ENCODE measurements at regions of chr6 and their contacts with region 1.

Region 1: DNA sequence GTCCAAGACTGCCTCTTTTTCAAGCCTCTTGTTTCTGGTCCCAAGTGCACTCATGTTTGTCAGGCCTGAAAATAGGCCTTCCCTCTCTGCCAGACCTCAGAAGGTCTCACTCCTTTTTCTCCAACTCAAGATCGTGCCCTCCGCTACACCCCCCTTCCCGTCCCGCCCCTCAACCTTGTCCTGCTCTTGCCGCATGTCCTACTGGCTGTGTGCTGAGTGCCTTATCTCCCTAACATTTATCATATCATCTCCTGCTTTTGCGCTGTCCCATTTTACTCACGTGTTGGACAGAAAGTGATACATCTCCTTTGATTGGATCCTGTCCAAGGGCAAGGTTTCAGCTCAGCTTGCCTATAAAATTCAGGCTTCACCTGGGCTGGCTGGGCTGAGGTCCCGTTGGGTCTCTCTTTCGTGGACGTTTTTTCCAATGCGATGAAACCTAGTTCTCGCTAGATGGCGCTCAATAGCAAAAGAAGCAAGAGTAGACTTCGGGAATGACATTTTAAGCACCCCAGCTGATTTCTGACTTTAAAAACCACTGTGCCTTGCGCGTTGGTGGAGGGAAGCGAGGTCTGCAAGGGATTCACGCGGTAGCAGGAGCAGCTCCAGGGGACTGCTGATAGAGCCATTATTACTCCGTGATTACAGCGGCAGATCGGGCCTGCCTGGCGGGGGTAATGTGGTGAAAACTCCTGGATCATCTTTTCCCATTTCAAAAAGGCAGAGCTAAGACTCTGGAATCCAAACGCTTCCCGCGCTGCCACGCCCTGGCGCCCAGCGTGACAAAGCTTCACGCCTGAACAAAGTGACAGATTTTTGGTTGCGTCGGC is 137.6 kb downstream of the IMPG1 start:
- DNase-seq: peak; percentile 16
- ATAC-seq: peak; percentile 86
- H3K4me3 ChIP-seq: peak overlapping the region; percentile 14; the same call in 1 of the 2 replicates
- H3K27ac ChIP-seq: no peak overlapping the region
- H3K4me1 ChIP-seq: no peaks in the 10 kb centered on the region; the same call in 1 of the 2 replicates
- H3K27me3 ChIP-seq: peaks cover 0 to 2% of the 10 kb centered on the region in 2 experiments; a peak in 1 of 4 replicates
- CTCF ChIP-seq: peak; percentile 74 to 84 (median 76)
- EP300 ChIP-seq: no peak
- POLR2A ChIP-seq: no peak
- RAD21 ChIP-seq: peak; percentile 84

Region 2: GRCh38 chr6:75458895-75459294 is 476.0 kb before region 1 on chr6:
- CTCF ChIA-PET with region 1: no interaction called
- POLR2A ChIA-PET with region 1: no interaction called
- RAD21 ChIA-PET with region 1: no interaction called
- SMC1A ChIA-PET with region 1: no interaction called
- in situ Hi-C with region 1: no loop called
- intact Hi-C with region 1: no loop called
- DNase-seq: no peak
- ATAC-seq: no peak
- H3K4me3 ChIP-seq: no peak overlapping the region
- H3K27ac ChIP-seq: no peak overlapping the region
- H3K4me1 ChIP-seq: no peaks in the 10 kb centered on the region
- H3K27me3 ChIP-seq: no peaks in the 10 kb centered on the region
- CTCF ChIP-seq: no peak
- EP300 ChIP-seq: no peak
- POLR2A ChIP-seq: no peak
- RAD21 ChIP-seq: no peak

Region 3: DNA sequence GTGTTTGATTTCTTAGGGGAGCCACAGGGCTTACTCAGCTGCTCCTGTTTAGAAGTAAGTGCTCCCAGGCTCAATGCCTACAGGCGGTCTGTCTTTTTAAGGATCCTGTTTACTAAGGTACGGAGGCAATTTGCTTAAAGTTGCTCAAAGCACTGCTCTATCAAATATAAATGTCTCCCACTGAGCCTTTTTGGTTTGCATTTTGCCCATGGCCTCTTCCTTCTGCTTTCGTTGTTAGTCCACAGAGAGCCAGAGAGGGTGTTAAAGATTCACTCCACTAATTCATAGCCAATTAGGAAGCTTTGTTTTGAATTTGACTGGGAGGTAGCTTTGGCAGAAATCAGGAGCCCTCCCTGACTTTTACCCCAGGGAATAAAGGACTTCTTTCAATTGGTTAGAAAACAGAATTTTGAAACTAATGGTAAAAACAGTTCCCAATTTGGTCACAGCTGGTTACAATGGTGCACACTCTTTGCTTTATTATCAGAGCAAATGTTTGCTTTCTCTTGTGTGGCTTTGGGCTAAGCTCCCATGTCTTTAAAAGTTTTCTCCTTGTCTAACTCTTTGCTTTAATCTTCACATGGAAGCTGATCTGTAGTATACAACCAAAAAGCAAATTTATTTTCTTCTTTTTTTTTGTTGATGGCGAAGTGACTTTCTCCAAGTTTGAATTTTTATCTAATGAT is 11.4 kb after region 1 on chr6:
- CTCF ChIA-PET with region 1: interaction called, 62 read pairs
- POLR2A ChIA-PET with region 1: no interaction called
- RAD21 ChIA-PET with region 1: interaction called, 4 read pairs
- SMC1A ChIA-PET with region 1: interaction called, 19 read pairs
- in situ Hi-C with region 1: no loop called
- intact Hi-C with region 1: no loop called
- DNase-seq: peak; percentile 19
- ATAC-seq: peak; percentile 77
- H3K4me3 ChIP-seq: no peak overlapping the region
- H3K27ac ChIP-seq: no peak overlapping the region
- H3K4me1 ChIP-seq: no peaks in the 10 kb centered on the region; the same call in 1 of the 2 replicates
- H3K27me3 ChIP-seq: no peaks in the 10 kb centered on the region
- CTCF ChIP-seq: no peak
- EP300 ChIP-seq: no peak
- POLR2A ChIP-seq: no peak
- RAD21 ChIP-seq: no peak

Region 4: GRCh38 chr6:76052314-76052713 is 117.5 kb after region 1 on chr6:
- CTCF ChIA-PET with region 1: no interaction called
- POLR2A ChIA-PET with region 1: no interaction called
- RAD21 ChIA-PET with region 1: no interaction called
- SMC1A ChIA-PET with region 1: no interaction called
- in situ Hi-C with region 1: no loop called
- intact Hi-C with region 1: no loop called
- DNase-seq: no peak
- ATAC-seq: no peak
- H3K4me3 ChIP-seq: no peak overlapping the region
- H3K27ac ChIP-seq: no peak overlapping the region
- H3K4me1 ChIP-seq: no peaks in the 10 kb centered on the region
- H3K27me3 ChIP-seq: no peaks in the 10 kb centered on the region
- CTCF ChIP-seq: no peak
- EP300 ChIP-seq: no peak
- POLR2A ChIP-seq: no peak
- RAD21 ChIP-seq: no peak

Region 5: DNA sequence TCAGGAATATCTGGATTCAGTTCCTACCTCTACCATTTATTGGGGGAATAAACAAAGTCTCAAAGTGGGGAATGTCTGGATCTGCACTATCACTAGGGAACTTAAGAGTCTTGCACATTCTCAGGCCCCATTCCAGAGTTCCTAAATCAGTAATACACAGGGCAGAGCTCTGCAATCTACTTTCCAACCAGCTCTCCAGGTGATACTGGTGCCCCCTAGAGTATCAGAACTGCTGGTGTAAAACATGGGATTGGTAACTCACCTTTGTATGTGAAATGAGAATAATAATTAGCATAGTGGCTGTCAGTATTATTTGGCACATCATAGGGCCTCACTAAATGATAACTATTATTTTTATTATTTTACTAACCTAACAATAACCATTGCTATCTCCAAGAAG is 416.4 kb after region 1 on chr6:
- CTCF ChIA-PET with region 1: interaction called, 16 read pairs
- POLR2A ChIA-PET with region 1: no interaction called
- RAD21 ChIA-PET with region 1: no interaction called
- SMC1A ChIA-PET with region 1: interaction called, 3 read pairs
- in situ Hi-C with region 1: no loop called
- intact Hi-C with region 1: loop called (anchors 5 kb)
- DNase-seq: no peak
- ATAC-seq: peak; percentile 54
- H3K4me3 ChIP-seq: no peak overlapping the region
- H3K27ac ChIP-seq: no peak overlapping the region
- H3K4me1 ChIP-seq: no peaks in the 10 kb centered on the region
- H3K27me3 ChIP-seq: no peaks in the 10 kb centered on the region
- CTCF ChIP-seq: peak; percentile 11 to 33 (median 31); a peak in 2 of 6 replicates
- EP300 ChIP-seq: no peak
- POLR2A ChIP-seq: no peak
- RAD21 ChIP-seq: peak; percentile 35; the same call in 1 of the 2 replicates

Region 6: DNA sequence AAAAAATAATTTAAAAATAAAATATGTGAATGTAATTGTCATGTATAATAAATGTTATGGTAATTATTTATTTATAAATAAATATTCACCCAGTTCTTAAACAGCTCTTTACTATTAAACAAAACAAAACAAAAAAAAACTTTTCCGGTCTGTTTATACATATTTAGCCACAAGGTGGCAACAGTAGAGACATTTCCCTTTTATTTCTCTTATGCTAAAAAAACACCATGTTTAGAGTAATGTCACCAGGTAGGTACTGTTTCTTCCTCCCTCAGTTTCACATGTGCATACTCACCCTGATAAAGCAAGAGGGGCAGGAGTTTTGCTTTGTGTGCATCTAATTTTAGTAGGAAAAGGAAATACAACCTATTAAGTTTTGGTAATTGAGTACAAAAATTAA is 748.0 kb after region 1 on chr6:
- CTCF ChIA-PET with region 1: no interaction called
- POLR2A ChIA-PET with region 1: no interaction called
- RAD21 ChIA-PET with region 1: no interaction called
- SMC1A ChIA-PET with region 1: interaction called, 6 read pairs
- in situ Hi-C with region 1: no loop called
- intact Hi-C with region 1: loop called (anchors 10 kb)
- DNase-seq: no peak
- ATAC-seq: peak; percentile 55; the same call in 2 of the 3 replicates
- H3K4me3 ChIP-seq: no peak overlapping the region
- H3K27ac ChIP-seq: no peak overlapping the region
- H3K4me1 ChIP-seq: no peaks in the 10 kb centered on the region
- H3K27me3 ChIP-seq: no peaks in the 10 kb centered on the region
- CTCF ChIP-seq: peak in 2 of 3 experiments; percentile 21 to 31; a peak in 3 of 6 replicates
- EP300 ChIP-seq: no peak
- POLR2A ChIP-seq: no peak
- RAD21 ChIP-seq: no peak

Measured in GM12878 (cell line).